ENCODE measurements at regions of chr5 and their contacts with region 1.

Region 1: DNA sequence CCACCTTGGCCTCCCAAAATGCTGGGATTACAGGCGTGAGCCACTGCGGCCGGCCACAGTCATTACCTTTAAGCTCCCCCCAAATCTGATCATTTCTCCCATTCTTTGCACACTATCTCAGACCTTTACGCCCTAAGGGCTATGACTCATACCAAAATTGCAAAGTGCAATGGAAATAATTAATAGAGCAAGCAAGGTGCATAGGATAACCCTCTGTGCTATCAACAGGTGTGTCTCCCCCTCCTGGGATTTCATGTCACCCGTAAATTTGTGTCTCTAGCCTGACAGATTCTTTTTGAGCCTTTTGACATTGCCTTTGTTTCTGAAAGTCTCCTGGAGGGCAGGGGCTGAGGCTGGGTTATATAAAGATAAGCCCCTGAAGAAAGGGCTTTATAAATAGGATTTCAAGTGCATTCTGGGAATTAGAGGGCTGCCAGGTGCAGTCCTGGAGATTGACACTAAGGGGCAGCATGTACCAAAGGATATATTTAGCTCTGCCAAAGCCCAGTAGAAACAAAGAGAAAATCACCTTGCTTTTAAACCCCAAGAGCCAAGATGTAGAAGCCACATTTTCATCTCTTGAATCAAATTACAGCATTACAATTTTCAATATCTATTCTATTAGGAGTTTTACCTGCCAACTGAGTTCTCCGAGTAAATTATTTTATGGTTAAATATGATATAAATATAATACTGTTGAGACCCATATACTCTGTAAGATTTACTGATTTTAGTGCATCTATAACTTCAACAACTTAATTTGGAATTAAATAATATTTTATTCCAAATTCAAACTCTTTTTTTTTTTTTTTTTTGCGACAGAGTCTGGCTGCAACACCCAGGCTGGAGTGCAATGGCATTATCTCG is 18.2 kb downstream of the S100Z start:
- DNase-seq: peak; percentile 86
- H3K4me3 ChIP-seq: no peak overlapping the region
- H3K27ac ChIP-seq: no peak overlapping the region
- H3K4me1 ChIP-seq: no peaks in the 10 kb centered on the region
- H3K27me3 ChIP-seq: no peaks in the 10 kb centered on the region
- CTCF ChIP-seq: peak; percentile 71 to 79
- POLR2A ChIP-seq: no peak

Region 2: DNA sequence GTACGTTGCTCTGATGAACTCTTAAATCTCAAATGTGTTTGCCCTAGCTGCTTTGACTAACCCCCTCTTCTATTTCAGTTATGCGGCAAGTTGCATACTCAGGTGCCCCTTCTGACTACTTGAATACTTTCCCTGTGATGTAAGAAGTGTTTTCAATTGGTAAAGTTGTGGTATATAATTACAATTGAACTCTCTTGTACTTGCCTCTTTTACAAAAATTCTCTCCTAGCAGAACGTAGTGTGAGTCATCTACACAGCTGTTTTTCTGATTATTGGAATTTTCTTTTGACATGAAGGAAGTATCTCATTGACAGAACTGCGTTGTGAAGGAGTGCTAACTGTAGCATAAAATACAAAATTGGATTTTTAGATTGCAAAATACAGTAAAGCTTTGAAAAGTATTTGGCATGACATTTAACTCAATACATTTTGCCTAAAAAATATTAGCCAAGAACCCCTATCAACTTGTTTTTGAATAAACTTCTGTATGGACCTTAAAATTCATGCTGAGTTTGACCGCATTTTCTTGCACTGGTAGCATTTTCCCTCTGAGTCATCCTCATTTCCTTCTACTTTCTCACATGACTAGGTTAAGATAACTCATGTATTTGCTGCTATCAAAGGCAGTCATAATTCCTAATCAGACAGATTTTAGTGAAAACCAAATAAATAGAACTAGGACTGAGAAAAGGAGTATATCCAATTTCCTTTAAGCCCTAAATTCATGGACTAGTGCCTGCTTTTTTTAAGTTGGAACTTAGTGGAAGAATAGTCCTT is 91.1 kb after region 1 on chr5:
- CTCF ChIA-PET with region 1: no interaction called
- POLR2A ChIA-PET with region 1: no interaction called
- dilution Hi-C with region 1: no loop called
- intact Hi-C with region 1: loop called (anchors 5 kb)
- DNase-seq: peak; percentile 83
- H3K4me3 ChIP-seq: peak overlapping the region in 1 of 3 experiments; percentile 26
- H3K27ac ChIP-seq: peak overlapping the region; percentile 9
- H3K4me1 ChIP-seq: peaks cover 15% of the 10 kb centered on the region
- H3K27me3 ChIP-seq: peaks cover 12 to 13% of the 10 kb centered on the region in 2 experiments
- CTCF ChIP-seq: no peak
- POLR2A ChIP-seq: no peak

Region 3: DNA sequence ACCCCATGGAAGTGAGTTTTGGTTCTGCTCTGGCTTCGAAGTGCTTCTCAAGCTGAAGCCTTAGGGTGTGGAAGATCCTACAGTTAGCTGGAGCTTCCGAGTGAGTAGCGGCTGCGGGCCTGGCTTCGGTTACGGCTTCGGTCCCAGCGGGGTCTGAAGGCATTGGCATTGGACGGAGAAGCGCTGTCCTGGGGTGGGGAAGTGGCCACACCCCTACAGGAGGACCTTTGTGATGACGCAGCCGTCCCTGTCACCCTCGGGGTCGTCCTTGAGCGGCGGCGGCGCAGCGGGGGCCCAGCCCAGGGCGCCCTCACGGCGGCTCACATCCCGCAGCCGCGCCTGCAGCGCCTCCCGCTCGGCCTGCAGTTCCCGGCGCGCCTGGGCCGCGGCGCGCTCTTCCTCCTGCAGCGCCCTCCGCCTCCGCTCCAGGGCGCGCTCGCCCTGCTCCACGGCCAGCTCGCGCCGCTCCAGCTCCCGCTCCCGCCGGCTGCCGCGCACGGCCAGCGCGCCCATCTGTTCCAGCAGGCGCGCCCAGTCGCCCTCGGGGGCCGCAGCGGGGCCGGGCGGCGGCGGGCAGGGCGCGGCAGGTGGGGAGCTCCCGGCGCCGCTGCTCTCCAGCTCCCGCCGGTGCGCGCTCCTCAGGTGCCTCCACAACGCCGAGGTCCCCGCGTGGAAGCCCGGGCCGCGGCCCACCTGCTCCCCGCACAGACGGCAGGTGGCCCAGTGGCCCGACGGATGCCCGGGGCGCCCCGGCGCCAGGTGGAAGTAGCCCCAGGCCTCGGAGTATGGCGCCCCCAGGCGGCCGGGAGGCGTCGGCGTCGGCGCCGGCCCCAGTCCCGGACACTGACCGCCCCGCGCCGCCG is 209.1 kb after region 1 on chr5:
- CTCF ChIA-PET with region 1: interaction called, 29 read pairs
- POLR2A ChIA-PET with region 1: no interaction called
- dilution Hi-C with region 1: no loop called
- intact Hi-C with region 1: loop called (anchors 1 kb)
- DNase-seq: peak; percentile 61
- H3K4me3 ChIP-seq: peak overlapping the region in 2 of 3 experiments; percentile 35
- H3K27ac ChIP-seq: no peak overlapping the region
- H3K4me1 ChIP-seq: peaks cover 3% of the 10 kb centered on the region
- H3K27me3 ChIP-seq: no peaks in the 10 kb centered on the region
- CTCF ChIP-seq: peak; percentile 79 to 89
- POLR2A ChIP-seq: no peak

Region 4: GRCh38 chr5:77239126-77239741 is 371.2 kb after region 1 on chr5:
- CTCF ChIA-PET with region 1: interaction called, 11 read pairs
- POLR2A ChIA-PET with region 1: no interaction called
- dilution Hi-C with region 1: no loop called
- intact Hi-C with region 1: loop called (anchors 2 kb)
- DNase-seq: peak; percentile 20
- H3K4me3 ChIP-seq: no peak overlapping the region
- H3K27ac ChIP-seq: no peak overlapping the region
- H3K4me1 ChIP-seq: no peaks in the 10 kb centered on the region
- H3K27me3 ChIP-seq: peaks cover 2 to 8% of the 10 kb centered on the region in 2 experiments
- CTCF ChIP-seq: peak; percentile 14 to 26
- POLR2A ChIP-seq: no peak

Region 5: DNA sequence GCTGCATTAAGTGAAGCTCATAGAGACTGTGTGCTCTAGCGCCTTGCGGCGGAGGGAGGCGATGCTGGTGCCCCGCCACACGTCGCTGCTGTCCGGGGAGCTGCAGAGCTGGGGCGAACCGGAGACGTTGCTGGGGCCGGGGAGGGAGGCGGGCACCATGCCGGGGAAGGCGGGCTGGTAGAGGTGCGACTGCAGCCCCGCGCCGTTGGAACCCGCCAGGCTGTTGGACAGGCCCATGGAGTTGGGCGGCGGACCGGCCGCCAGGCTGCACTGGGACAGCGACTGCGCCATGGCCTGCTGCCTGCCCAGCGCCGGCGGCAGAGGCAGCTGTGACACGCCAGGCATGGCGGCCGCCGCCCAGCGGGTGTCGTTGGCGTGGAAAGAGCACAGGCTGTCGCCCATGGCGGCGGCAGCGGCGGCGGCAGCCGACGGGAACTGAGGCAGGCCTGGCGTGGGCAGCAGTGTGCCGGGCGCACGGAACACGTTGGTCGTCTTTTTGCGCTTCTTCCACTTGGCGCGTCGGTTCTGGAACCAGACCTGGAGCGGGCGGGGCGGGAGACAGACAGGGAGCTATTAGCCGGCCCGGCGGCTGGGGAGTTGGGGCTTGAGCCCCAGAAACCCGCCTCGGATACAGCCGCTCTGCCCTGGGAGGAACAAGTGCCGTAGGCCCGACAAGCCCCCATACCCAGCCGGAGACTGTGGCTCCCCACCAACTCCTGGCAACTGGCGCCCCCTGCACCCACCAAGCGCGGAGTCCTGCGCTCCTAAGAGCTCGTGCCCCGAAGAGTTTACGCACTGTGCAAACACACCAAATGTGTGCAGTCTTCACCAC is 762.4 kb after region 1 on chr5:
- CTCF ChIA-PET with region 1: no interaction called
- POLR2A ChIA-PET with region 1: no interaction called
- dilution Hi-C with region 1: no loop called
- intact Hi-C with region 1: loop called (anchors 10 kb)
- DNase-seq: no peak
- H3K4me3 ChIP-seq: peak overlapping the region in 1 of 3 experiments; percentile 14
- H3K27ac ChIP-seq: no peak overlapping the region
- H3K4me1 ChIP-seq: peaks cover 5% of the 10 kb centered on the region
- H3K27me3 ChIP-seq: peaks cover 61 to 100% of the 10 kb centered on the region in 2 experiments
- CTCF ChIP-seq: peak in 1 of 2 donors; percentile 6
- POLR2A ChIP-seq: no peak